ENCODE measurements at regions of chr1 and their contacts with region 1.

Region 1: DNA sequence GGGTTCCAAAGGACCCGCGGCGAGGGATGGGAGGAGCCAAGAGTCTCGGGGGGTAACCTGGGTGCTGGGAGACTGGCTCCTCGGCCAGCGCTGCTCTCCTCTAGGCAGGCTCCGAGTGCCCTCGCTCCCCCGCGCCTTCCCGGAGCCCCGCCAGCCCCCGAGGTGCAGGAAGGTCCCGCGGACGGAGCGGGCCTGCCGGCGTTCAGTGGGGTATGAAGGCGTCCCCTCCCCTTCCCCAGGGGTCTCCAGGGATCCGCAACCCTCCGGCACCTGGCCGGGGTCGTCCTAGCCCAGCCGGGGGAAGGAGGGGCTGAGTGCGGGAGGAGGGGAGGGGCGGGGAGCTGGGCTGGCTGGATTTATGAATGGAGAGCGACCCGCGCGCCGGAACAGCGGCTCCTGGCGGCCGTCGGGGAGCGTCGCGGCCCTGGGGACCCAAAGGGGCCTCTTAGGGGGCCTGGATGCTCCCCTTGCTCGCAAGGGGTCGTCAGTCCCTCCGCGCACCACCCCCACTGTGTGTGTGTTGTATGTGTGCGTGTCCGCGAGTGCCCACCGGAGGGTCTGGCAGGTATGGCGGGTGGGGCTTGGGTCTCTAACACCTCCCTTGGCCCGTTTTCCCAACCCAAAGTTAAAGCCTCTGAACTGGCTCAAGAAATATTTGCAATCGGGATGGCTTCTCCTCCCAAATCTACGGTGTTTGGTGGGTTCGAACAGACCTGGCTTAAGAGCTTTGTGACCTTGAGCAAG is 600 bp downstream of the HCRTR1 start:
- DNase-seq: peak; percentile 67
- ATAC-seq: peak; percentile 85
- H3K4me3 Mint-ChIP-seq: peak overlapping the region; percentile 56
- H3K27ac Mint-ChIP-seq: no peak overlapping the region
- H3K4me1 Mint-ChIP-seq: peaks cover 19% of the 10 kb centered on the region
- H3K27me3 Mint-ChIP-seq: peaks cover 20% of the 10 kb centered on the region
- CTCF ChIP-seq: no peak

Region 2: DNA sequence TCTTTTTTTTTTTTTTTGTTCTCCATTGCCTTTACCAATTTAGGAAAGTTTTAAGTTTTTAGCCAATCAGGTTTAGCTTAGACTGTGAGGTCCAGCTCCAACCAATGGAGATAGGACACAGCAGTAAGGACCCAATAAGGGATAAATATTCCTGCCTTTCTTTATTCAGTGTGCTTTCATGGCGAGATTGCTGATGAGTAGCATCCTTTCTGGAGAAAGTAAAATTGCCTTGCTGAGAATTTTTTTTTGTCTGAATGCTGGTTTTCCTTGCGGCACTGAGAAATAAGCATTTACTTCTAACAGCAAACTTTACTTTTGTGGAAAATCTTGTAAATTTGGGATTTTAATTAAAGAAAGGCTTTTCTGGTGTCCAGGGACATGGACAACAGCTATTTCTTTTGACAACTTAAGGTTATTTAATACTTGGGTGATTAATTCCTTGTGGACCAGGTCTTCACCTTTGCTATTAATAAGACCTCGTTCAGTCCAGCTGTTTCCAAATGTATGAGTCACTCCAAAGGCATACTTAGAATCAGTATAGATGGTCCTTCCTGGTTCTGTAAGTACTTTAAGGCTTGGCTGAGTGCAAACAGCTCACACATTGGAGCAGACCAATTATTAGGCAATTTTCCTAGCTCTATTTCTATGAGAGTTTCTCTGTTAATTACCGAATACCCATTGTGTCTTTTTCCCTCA is 150.9 kb before region 1 on chr1:
- CTCF ChIA-PET with region 1: no interaction called
- POLR2A ChIA-PET with region 1: no interaction called
- intact Hi-C with region 1: no loop called
- DNase-seq: no peak
- ATAC-seq: no peak
- H3K4me3 Mint-ChIP-seq: no peak overlapping the region
- H3K27ac Mint-ChIP-seq: no peak overlapping the region
- H3K4me1 Mint-ChIP-seq: peaks cover 9% of the 10 kb centered on the region
- H3K27me3 Mint-ChIP-seq: peaks cover 7% of the 10 kb centered on the region
- CTCF ChIP-seq: no peak

Region 3: DNA sequence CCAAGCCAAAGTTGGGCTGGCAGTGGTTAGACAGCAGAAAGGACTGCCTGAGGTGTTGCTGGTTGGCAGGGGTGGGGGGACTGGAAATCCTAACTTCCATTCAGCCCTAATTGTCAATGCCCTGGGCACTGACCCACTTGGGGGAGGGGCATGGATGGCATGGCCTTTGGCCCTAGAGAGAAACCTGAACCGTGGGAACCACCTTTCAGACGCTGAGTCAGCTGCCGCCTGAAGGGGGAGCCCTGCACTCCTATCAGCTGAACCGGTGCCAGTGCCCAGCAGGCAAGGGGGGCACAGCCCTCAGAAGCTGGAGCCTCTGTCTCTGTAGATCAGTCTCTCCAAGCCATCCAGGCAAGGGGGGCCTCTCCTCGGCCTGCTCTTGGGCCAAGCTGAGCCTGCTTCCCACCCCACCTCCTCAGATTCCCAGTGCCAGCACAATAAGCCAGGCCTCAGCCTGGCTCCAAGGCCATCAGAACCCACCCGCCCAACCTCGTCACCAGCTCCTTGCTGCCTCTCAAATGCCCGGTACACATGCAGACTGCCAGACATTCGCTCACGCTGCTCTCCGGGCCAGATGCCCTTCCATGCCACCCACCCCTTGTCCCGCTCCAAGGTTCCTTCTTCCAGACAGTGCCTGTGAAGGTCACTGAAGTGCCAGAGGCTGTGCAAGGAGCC is 30.2 kb before region 1 on chr1:
- CTCF ChIA-PET with region 1: interaction called, 8 read pairs
- POLR2A ChIA-PET with region 1: interaction called, 5 read pairs
- intact Hi-C with region 1: loop called (anchors 1 kb)
- DNase-seq: peak; percentile 46
- ATAC-seq: peak; percentile 80
- H3K4me3 Mint-ChIP-seq: no peak overlapping the region
- H3K27ac Mint-ChIP-seq: no peak overlapping the region
- H3K4me1 Mint-ChIP-seq: peaks cover 10% of the 10 kb centered on the region
- H3K27me3 Mint-ChIP-seq: peaks cover 26% of the 10 kb centered on the region
- CTCF ChIP-seq: no peak

Region 4: GRCh38 chr1:31593770-31594632 is 24.1 kb before region 1 on chr1:
- CTCF ChIA-PET with region 1: interaction called, 3 read pairs
- POLR2A ChIA-PET with region 1: interaction called, 3 read pairs
- intact Hi-C with region 1: loop called (anchors 2 kb)
- DNase-seq: peak; percentile 45
- ATAC-seq: peak; percentile 96
- H3K4me3 Mint-ChIP-seq: no peak overlapping the region
- H3K27ac Mint-ChIP-seq: no peak overlapping the region
- H3K4me1 Mint-ChIP-seq: peaks cover 14% of the 10 kb centered on the region
- H3K27me3 Mint-ChIP-seq: peaks cover 16% of the 10 kb centered on the region
- CTCF ChIP-seq: no peak

Measured in activated B cell treated with CpG ODN at 0.5 μM for 24 hours (primary cell).